HepG2 (cell line): ENCODE measurements at regions of chr6 and their contacts with region 1.

Region 1: DNA sequence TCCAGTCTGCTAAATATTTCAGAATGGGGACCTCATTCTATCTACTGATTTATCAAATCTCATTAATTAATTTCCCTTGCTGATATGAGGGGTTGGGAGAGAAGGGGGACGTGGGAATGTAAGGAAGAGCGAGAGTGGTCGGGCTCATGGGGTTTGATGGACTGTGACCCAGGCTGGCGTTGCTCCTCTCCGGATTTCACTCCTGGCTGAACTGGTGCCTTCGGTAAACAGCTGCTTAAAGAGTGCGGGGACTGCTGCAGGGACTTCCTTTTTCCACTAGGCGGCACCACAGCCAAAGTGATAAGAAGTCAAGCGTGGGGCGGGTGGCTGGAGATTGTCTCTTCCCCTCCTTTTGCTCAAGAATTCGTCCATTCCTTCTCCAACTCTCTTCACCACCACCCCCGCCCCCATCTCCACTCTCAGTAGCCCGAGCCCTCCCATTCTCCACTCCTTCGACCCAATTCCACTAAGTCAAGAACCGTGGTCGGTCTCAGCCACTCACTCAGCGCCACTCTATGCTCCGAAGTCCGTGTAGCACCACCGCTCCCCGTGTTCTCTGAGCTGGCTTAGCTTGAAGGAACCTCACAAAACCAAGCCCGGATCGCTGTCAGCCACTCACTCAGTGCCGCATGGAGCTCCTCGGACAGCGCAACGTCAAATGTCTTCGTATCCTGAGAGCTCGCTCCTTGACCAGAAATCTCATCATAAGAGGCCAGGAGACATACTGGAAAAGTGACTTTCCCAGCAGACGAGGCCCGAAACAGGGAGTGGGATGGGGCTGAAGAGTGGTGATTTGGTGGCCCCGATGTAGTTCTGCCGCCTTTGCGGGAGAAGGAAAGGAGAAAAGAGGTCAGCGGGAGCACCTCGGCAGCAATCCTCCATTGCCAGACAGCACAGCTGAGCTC is 9.7 kb downstream of the TRIM31 start:
- DNase-seq: peak; percentile 90
- ATAC-seq: peak; percentile 68
- H3K4me3 ChIP-seq: peak overlapping the region; percentile 63 to 77 (median 63)
- H3K27ac ChIP-seq: peak overlapping the region; percentile 79
- H3K4me1 ChIP-seq: peaks cover 56% of the 10 kb centered on the region
- H3K27me3 ChIP-seq: no peaks in the 10 kb centered on the region; a peak in 1 of 5 replicates
- CTCF ChIP-seq: peak; percentile 99
- EP300 ChIP-seq: no peak; a peak in 1 of 4 replicates
- POLR2A ChIP-seq: peak; percentile 42 to 79; a peak in 3 of 4 replicates
- RAD21 ChIP-seq: peak; percentile 96

Region 2: GRCh38 chr6:30061092-30061857 is 41.9 kb before region 1 on chr6 and contains the start of gene POLR1H:
- CTCF ChIA-PET with region 1: no interaction called
- POLR2A ChIA-PET with region 1: interaction called, 35 read pairs
- in situ Hi-C with region 1: no loop called
- intact Hi-C with region 1: loop called (anchors 1 kb)
- DNase-seq: peak; percentile 95
- ATAC-seq: peak; percentile 98
- H3K4me3 ChIP-seq: peak within 1 kb of the TSS; percentile 89 to 99 (median 93)
- H3K27ac ChIP-seq: peak within 1 kb of the TSS; percentile 75
- H3K4me1 ChIP-seq: peaks cover 35% of the 10 kb centered on the region
- H3K27me3 ChIP-seq: peaks cover 0 to 4% of the 10 kb centered on the region in 2 experiments; a peak in 1 of 5 replicates
- CTCF ChIP-seq: no peak; the same call in 1 of the 2 replicates
- EP300 ChIP-seq: peak; percentile 34 to 59; a peak in 3 of 4 replicates
- POLR2A ChIP-seq: peak; percentile 90 to 97
- RAD21 ChIP-seq: no peak; the same call in 1 of the 2 replicates
- total RNA-seq, gene POLR1H: 79.8 and 106 TPM in 2 replicates

Region 3: GRCh38 chr6:30091577-30092381 is 11.4 kb before region 1 on chr6:
- CTCF ChIA-PET with region 1: no interaction called
- POLR2A ChIA-PET with region 1: interaction called, 13 read pairs
- in situ Hi-C with region 1: no loop called
- intact Hi-C with region 1: no loop called
- DNase-seq: peak; percentile 30
- ATAC-seq: peak; percentile 19
- H3K4me3 ChIP-seq: peak overlapping the region in 1 of 3 experiments; percentile 35; a peak in 2 of 6 replicates
- H3K27ac ChIP-seq: no peak overlapping the region
- H3K4me1 ChIP-seq: peaks cover 55% of the 10 kb centered on the region
- H3K27me3 ChIP-seq: peaks cover 2 to 28% of the 10 kb centered on the region in 2 experiments; a peak in 3 of 5 replicates
- CTCF ChIP-seq: no peak
- EP300 ChIP-seq: no peak
- POLR2A ChIP-seq: no peak
- RAD21 ChIP-seq: no peak

Region 4: DNA sequence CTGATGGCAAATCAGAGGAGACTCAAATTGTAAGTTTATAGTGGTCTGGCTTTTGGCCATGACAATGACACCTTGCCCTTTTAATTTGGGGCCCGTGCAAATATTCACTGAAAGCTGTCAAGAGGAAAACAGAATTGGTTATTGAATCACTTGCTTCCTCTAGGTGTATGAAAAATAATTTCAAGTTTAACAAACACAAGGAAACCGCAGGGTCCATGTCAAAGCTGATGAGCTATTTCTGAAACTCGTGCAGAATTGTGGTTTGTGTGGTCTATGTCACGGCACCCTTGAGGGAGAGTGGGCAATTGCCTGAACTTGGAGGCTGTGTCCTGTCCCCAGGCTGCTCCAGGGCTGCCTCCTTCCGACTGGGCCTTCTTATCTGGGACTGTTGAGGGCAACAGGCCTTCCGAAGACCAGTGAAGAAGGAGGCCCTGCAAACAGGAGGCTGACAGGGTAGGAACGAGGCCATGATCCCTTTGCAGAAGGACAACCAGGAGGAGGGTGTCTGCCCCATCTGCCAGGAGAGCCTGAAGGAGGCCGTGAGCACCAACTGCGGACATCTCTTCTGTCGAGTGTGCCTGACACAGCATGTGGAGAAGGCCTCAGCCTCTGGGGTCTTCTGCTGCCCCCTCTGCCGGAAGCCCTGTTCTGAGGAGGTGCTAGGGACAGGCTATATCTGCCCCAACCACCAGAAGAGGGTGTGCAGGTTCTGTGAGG is 33.5 kb after region 1 on chr6:
- CTCF ChIA-PET with region 1: interaction called, 140 read pairs
- POLR2A ChIA-PET with region 1: interaction called, 43 read pairs
- in situ Hi-C with region 1: no loop called
- intact Hi-C with region 1: loop called (anchors 1 kb)
- DNase-seq: no peak
- ATAC-seq: peak; percentile 12; the same call in 1 of the 3 replicates
- H3K4me3 ChIP-seq: no peak overlapping the region; a peak in 1 of 6 replicates
- H3K27ac ChIP-seq: no peak overlapping the region
- H3K4me1 ChIP-seq: peaks cover 72% of the 10 kb centered on the region
- H3K27me3 ChIP-seq: no peaks in the 10 kb centered on the region
- CTCF ChIP-seq: peak; percentile 28; the same call in 1 of the 2 replicates
- EP300 ChIP-seq: no peak
- POLR2A ChIP-seq: no peak
- RAD21 ChIP-seq: no peak

Region 5: DNA sequence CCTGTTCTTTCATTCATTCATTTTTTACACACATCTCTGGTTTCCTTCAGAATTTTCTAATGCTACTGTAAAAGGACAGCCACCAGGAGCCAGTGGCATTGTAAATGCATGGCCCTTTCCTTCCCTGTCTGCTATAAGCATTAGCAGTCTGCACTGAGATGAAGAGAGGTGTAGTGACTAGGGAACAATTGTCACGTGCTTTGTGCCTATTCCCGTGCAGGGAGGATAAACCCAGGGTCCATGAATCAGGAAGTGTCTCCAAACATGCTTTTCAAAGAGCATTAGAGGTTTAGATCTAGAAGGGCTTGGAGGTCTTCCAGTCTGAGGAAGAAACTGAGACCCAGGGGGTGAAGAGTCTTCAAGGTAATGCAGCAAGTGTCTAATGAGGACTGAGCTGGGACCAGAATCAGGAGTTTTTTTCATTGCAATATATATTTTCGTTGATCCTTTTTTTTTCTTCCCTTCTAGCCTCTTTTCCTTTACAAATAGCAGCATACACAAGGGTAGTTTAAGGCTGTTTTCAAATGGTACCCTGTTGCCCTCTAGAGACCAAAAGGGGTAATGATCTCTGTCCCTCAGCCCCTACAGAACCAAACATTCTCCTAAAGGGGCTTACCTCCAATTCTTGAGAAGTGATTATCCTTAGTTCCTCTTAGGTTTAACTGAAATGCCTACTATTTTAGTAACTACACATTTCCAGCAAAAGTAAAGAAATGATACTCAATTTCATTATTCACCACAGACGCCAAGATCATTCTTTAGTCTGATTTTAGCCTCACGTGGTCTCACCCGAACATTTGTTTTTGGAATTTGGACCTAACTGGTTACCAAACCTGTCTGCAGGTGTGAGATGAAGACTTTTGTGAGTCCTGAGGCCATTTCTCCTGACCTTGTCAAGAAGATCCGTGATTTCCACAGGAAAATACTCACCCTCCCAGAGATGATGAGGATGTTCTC is 66.7 kb after region 1 on chr6:
- CTCF ChIA-PET with region 1: interaction called, 46 read pairs
- POLR2A ChIA-PET with region 1: interaction called, 26 read pairs
- in situ Hi-C with region 1: loop called (anchors 5 kb)
- intact Hi-C with region 1: loop called (anchors 1 kb)
- DNase-seq: peak; percentile 68
- ATAC-seq: peak; percentile 93
- H3K4me3 ChIP-seq: no peak overlapping the region
- H3K27ac ChIP-seq: no peak overlapping the region
- H3K4me1 ChIP-seq: peaks cover 28% of the 10 kb centered on the region
- H3K27me3 ChIP-seq: peaks cover 0 to under 1% of the 10 kb centered on the region in 2 experiments; a peak in 1 of 5 replicates
- CTCF ChIP-seq: peak; percentile 86
- EP300 ChIP-seq: no peak
- POLR2A ChIP-seq: no peak
- RAD21 ChIP-seq: peak; percentile 89